ENCODE measurements at regions of chr10 and their contacts with region 1.

Region 1: DNA sequence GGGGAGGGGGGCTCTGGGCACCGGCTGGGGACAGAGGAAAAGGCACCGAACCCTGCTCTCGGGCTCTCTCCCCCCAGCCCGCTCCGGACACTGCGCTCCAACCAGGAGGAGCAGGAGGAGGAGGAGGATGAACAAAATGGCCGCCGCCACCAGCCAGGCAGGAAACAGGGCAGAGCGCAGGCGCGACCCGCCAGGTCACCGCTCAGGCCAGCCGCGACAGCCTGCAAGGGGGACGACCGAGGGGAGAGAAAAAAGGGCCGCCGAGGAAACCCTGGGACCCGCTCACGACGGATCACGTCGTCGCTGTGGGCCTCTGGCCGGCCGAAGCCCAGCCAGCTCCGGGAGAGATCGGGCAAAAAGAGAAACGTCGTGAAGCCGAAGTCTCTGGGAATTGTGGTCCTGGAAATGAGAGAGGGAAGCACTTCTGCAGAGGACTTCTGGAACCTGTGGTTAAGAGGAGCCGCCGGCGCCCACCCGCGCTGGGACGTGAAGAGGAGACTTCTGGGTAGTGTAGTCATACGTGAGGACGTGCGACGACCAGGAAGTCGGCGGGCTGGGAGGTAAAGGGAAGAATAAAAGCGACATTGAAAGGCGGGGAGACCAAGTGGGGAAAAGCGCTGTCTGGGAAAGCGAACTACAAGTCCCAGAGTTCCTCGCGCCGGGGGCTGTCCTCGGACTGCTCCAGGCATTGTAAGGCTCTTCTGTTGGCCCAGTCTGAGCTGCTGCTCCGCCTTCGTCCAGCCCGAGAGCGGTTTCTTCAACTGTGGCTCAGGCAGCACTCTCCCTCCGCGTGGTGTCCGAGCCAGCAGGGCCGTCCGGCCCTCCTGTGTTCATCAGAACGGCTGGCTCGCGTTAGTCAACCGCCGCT is at the start of gene TIAL1:
- DNase-seq: peak; percentile 99
- H3K4me3 ChIP-seq: peak within 1 kb of the TSS; percentile 95
- H3K27ac ChIP-seq: peak within 1 kb of the TSS; percentile 100
- H3K4me1 ChIP-seq: peaks cover 27% of the 10 kb centered on the region
- H3K27me3 ChIP-seq: no peaks in the 10 kb centered on the region
- CTCF ChIP-seq: no peak
- total RNA-seq, gene TIAL1: 104 to 126 TPM

Region 2: GRCh38 chr10:119521443-119522204 is 75.1 kb before region 1 on chr10:
- intact Hi-C with region 1: no loop called
- DNase-seq: no peak
- H3K4me3 ChIP-seq: no peak overlapping the region
- H3K27ac ChIP-seq: no peak overlapping the region
- H3K4me1 ChIP-seq: no peaks in the 10 kb centered on the region
- H3K27me3 ChIP-seq: no peaks in the 10 kb centered on the region
- CTCF ChIP-seq: no peak

Region 3: GRCh38 chr10:119650692-119651513 is 54.1 kb after region 1 on chr10 and contains the start of gene BAG3:
- intact Hi-C with region 1: loop called (anchors 5 kb)
- DNase-seq: peak; percentile 95
- H3K4me3 ChIP-seq: peak within 1 kb of the TSS; percentile 91
- H3K27ac ChIP-seq: peak within 1 kb of the TSS; percentile 96
- H3K4me1 ChIP-seq: no peaks in the 10 kb centered on the region
- H3K27me3 ChIP-seq: no peaks in the 10 kb centered on the region
- CTCF ChIP-seq: no peak
- total RNA-seq, gene BAG3: 30.4 to 48.9 TPM

Measured in colonic mucosa (tissue), 4 donors.